Activated CD4-positive, alpha-beta T cell treated with anti-CD3 and anti-CD28 coated beads for 36 hours (primary cell): ENCODE measurements at regions of chr1 and their contacts with region 1.

Region 1: GRCh38 chr1:236103646-236104218 is 38.6 kb upstream of the GPR137B start:
- DNase-seq: peak; percentile 75
- ATAC-seq: peak; percentile 80
- H3K4me3 Mint-ChIP-seq: no peak overlapping the region
- H3K27ac Mint-ChIP-seq: no peak overlapping the region
- H3K4me1 Mint-ChIP-seq: peaks cover 2% of the 10 kb centered on the region
- H3K27me3 Mint-ChIP-seq: peaks cover 2% of the 10 kb centered on the region

Region 2: GRCh38 chr1:236142253-236143103 is 38.7 kb after region 1 on chr1 and contains the start of gene GPR137B:
- CTCF ChIA-PET with region 1: interaction called, 3 read pairs
- POLR2A ChIA-PET with region 1: no interaction called
- intact Hi-C with region 1: loop called in 1 of 2 experiments (anchors 2 kb)
- DNase-seq: peak; percentile 78
- ATAC-seq: peak; percentile 67
- H3K4me3 Mint-ChIP-seq: peak within 1 kb of the TSS; percentile 95
- H3K27ac Mint-ChIP-seq: peak within 1 kb of the TSS; percentile 84
- H3K4me1 Mint-ChIP-seq: peaks cover 15% of the 10 kb centered on the region
- H3K27me3 Mint-ChIP-seq: peaks cover 34% of the 10 kb centered on the region
- total RNA-seq, gene GPR137B: 5.0 to 5.6 TPM

Region 3: DNA sequence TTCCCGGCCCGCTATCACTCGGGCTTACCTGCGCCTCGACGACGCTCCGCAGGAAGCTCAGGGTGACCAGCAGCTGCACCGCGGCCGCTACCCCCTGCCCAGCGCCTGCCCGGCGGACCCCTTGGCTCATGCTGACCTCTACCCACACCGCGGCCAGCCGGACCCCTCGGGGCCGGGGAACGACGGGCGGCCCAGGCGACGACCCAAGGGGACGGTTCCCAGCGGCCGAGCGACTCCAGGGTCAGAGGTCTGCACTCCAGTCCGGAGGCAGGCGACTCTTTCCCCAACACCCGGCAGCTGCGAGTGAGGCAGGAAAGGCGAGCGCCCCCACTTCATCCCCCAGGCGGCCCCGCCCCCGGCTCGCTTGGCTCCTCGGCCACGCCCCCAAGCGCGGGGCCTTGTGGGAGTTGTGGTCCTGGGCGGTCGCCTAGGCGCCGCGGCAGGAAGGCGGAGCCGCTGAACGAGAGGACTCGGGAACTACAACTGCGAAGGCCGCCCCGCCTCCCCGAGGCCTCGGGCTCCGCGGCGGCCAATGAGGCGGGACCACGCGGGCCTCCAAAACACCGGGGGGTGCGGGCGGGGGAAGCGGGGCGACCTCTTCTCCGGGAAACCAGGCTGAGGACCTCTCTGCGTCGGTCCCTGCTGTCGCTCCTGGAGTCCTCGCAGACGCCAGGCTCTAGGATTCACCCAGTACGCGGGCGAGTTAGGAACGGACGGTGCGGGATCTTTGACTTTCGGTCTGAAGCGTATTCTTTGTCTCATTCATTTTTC is 178.1 kb after region 1 on chr1 and contains the start of gene ERO1B:
- CTCF ChIA-PET with region 1: no interaction called
- POLR2A ChIA-PET with region 1: no interaction called
- intact Hi-C with region 1: loop called (anchors 5 kb)
- DNase-seq: peak; percentile 98
- ATAC-seq: peak; percentile 86
- H3K4me3 Mint-ChIP-seq: peak within 1 kb of the TSS; percentile 82
- H3K27ac Mint-ChIP-seq: peak within 1 kb of the TSS; percentile 70
- H3K4me1 Mint-ChIP-seq: peaks cover 47% of the 10 kb centered on the region
- H3K27me3 Mint-ChIP-seq: peaks cover 1% of the 10 kb centered on the region
- total RNA-seq, gene ERO1B: 2.2 to 2.8 TPM

Region 4: DNA sequence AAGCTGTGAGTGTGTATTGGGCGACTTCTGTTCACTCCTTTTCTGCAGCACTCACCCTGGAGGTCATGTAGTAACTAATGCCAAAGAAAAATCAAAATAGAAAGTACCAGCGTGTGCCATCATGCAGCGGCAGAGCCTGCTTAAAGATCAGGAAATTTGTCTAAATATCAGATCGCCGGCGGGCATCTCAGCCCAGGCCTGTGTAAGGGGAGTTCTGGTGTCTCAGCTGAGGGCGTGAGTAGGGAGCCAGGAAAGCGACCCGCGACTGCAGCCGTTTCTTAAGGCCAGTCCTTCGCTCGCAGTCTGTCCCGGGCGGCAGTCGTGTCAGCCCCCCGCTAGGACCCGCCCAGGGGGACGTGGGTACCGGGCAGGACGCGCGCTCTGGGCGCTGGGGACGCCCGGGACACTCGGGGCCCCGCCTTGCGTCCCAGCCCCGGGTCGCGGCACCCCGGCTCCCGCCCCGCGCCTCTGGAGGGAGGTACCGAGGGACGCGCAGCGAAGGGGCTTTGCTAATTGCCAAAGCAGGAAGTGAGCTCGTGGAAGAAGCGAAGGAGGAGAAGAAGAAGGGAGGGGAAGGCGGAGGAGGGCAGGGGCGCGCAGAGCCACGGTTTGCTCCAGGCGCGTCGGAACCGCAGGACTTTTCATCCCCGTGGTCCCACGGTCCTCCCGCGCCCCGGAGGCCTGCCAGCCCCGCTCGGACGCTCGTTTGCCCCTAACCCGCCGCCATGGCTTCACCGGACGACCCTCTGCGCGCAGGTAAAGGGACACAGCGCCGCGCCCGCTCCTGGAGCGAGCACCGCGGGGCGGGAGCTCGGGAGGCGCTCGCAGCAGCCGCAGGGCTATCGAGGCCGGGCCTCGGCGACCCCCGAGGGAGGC is 291.4 kb after region 1 on chr1:
- CTCF ChIA-PET with region 1: interaction called, 5 read pairs
- POLR2A ChIA-PET with region 1: no interaction called
- intact Hi-C with region 1: loop called in 1 of 2 experiments (anchors 1 kb)
- DNase-seq: peak; percentile 63
- ATAC-seq: peak; percentile 58
- H3K4me3 Mint-ChIP-seq: peak overlapping the region; percentile 79
- H3K27ac Mint-ChIP-seq: peak overlapping the region; percentile 68
- H3K4me1 Mint-ChIP-seq: peaks cover 28% of the 10 kb centered on the region
- H3K27me3 Mint-ChIP-seq: peaks cover 49% of the 10 kb centered on the region

Region 5: GRCh38 chr1:236489710-236490377 is 386.1 kb after region 1 on chr1:
- CTCF ChIA-PET with region 1: interaction called, 14 read pairs
- POLR2A ChIA-PET with region 1: no interaction called
- intact Hi-C with region 1: loop called in 1 of 2 experiments (anchors 1 kb)
- DNase-seq: no peak
- ATAC-seq: peak; percentile 51
- H3K4me3 Mint-ChIP-seq: no peak overlapping the region
- H3K27ac Mint-ChIP-seq: no peak overlapping the region
- H3K4me1 Mint-ChIP-seq: peaks cover 7% of the 10 kb centered on the region
- H3K27me3 Mint-ChIP-seq: peaks cover 4% of the 10 kb centered on the region

Region 6: GRCh38 chr1:236868625-236869467 is 765.1 kb after region 1 on chr1:
- CTCF ChIA-PET with region 1: no interaction called
- POLR2A ChIA-PET with region 1: no interaction called
- intact Hi-C with region 1: loop called in 1 of 2 experiments (anchors 2 kb)
- DNase-seq: peak; percentile 63
- ATAC-seq: peak; percentile 76
- H3K4me3 Mint-ChIP-seq: no peak overlapping the region
- H3K27ac Mint-ChIP-seq: no peak overlapping the region
- H3K4me1 Mint-ChIP-seq: peaks cover 3% of the 10 kb centered on the region
- H3K27me3 Mint-ChIP-seq: no peaks in the 10 kb centered on the region

Region 7: DNA sequence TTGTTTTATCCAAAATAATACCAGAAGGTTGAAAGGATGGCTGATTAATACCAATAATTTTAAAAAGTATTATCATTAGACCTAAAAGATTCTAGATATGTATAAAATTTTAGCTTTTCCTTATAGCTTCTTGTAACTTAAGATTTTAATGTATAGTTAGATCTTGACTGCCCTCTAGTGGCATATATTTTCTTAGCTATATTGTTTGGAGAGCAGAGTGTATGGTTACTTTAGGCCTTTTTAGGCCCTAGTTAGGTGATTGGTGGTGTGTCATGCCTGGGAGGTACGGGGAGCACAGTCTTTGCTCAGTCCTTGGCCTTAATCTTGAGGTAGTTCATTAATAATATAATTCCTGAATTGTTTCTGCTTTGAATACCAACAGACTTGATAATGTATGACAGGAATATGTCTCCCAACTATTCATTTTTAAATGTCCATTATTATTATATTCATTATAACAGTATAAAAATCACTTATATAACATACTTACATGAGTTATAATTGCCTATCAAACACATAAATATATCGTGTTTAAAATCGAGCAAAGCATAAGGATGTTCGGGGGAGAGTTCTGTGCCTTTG is 1458.6 kb after region 1 on chr1:
- CTCF ChIA-PET with region 1: no interaction called
- POLR2A ChIA-PET with region 1: no interaction called
- intact Hi-C with region 1: loop called in 1 of 2 experiments (anchors 10 kb)
- DNase-seq: no peak
- ATAC-seq: peak; percentile 72
- H3K4me3 Mint-ChIP-seq: no peak overlapping the region
- H3K27ac Mint-ChIP-seq: no peak overlapping the region
- H3K4me1 Mint-ChIP-seq: no peaks in the 10 kb centered on the region
- H3K27me3 Mint-ChIP-seq: peaks cover 11% of the 10 kb centered on the region